ENCODE measurements at regions of chr3 and their contacts with region 1.

Region 1: GRCh38 chr3:176939022-176939817 is 258.1 kb downstream of the TBL1XR1 start:
- DNase-seq: peak; percentile 72
- H3K27ac ChIP-seq: no peak overlapping the region
- CTCF ChIP-seq: peak; percentile 83

Region 2: DNA sequence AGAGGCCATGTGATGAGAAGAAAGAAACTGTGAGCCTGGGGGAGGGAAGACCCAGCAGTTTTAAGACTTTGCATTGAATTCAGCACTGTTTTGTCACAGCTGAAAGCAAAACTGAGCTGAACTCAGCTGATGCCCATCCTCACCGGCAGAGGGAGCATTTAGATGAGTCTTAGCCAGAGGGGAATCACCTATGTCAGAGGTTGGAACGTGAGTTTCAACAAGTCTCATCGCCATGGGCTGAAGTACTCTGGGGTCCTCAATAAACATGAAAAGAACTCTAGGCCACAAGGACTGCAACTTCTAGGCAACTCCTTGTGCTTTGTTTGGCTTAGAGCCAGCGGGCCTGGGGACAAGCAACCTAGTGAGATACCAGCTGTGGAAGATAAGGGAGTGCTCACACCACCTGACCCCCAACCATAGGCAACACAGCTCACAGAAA is 66.4 kb before region 1 on chr3:
- CTCF ChIA-PET with region 1: interaction called, 10 read pairs
- POLR2A ChIA-PET with region 1: interaction called, 3 read pairs
- DNase-seq: peak; percentile 34
- H3K27ac ChIP-seq: no peak overlapping the region
- CTCF ChIP-seq: peak; percentile 55

Region 3: DNA sequence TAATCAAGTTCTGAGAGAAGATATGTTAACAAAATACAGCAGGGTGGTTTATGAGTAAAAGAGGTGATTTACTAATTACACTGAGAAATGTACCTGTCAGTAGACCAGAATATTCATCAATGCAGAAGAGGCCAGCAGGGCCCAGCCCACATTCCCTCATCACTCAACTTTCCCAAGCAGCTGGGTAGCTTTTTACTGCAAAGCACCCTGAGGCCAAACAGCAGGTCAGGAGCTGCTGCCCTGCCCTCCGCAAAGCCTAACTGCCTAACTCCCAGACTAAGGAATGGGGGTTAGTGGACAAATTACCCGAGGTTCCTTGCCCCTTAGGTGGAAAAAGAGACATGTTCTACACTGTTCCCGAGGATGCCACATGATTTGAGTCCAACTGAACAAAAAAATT is 149.9 kb after region 1 on chr3:
- CTCF ChIA-PET with region 1: no interaction called
- POLR2A ChIA-PET with region 1: no interaction called
- DNase-seq: peak; percentile 10
- H3K27ac ChIP-seq: no peak overlapping the region
- CTCF ChIP-seq: no peak

Region 4: DNA sequence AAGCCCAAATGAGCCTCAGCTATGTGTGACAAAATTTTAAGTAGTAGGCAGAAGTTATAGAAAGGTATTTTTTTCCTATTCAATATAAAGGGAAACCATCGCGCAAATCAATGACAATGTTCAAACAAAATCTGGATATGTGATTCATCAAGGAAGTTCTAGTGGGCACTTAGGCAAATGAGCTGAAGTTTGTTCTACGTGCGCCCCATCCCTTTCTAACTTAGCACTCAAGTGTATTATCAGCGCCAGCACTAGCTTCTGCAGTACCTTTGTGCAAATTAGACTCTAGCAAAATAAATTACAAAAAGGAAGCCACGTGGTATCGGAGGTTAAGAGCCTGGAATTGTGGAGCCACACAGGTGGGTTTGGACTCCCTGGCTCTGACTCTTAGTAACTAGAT is 167.0 kb after region 1 on chr3:
- CTCF ChIA-PET with region 1: no interaction called
- POLR2A ChIA-PET with region 1: no interaction called
- DNase-seq: no peak
- H3K27ac ChIP-seq: no peak overlapping the region
- CTCF ChIP-seq: no peak

Measured in RWPE1 (cell line).